ENCODE measurements at regions of chr16 and their contacts with region 1.

Region 1: DNA sequence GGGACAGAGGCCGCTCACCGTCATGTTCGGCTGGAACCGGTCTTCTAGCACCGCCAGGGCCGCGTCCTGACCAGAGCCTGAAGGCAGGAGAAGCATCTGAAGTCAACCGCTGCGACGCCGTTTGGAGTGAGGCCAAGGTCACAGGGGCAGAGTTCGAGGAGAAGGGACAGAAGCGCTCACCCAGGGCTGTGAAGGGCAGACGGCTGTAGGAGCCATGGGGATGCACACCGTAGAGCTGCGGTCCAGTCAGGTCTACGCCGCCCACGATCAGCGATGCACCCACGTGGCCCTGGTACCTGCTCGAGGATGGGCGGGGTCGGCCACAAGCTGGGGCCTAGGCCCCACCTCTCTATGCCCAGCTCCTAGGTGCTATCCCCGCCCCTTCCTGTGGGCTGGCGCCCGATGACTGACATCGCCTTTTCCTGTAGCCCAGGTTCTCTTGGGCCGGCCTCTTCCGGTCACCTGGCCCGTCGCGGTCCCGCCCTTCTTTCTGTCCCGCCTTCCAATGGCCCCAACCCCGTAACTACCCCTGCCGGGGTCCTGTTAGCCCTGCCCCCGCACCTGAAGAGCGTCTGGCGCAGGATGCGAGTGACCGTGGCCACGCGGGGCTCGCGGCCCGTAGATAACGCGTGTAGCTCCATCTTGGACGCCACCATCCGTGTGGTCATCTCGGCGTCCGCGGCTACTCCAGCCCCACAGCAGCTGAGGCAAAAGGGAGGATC is 1.1 kb downstream of the PSMB10 start:
- DNase-seq: peak; percentile 86 to 99 (median 94)
- ATAC-seq: peak; percentile 91
- H3K4me3 ChIP-seq: peak overlapping the region; percentile 96
- H3K4me3 Mint-ChIP-seq: peak overlapping the region; percentile 98
- H3K27ac ChIP-seq: peak overlapping the region; percentile 84 to 89
- H3K27ac Mint-ChIP-seq: peak overlapping the region; percentile 95
- H3K4me1 ChIP-seq: peaks cover 48% of the 10 kb centered on the region
- H3K4me1 Mint-ChIP-seq: peaks cover 38% of the 10 kb centered on the region
- H3K27me3 ChIP-seq: no peaks in the 10 kb centered on the region
- H3K27me3 Mint-ChIP-seq: no peaks in the 10 kb centered on the region
- CTCF ChIP-seq: no peak

Region 2: GRCh38 chr16:67719048-67719777 is 216.3 kb before region 1 on chr16 and contains the start of gene GFOD2:
- CTCF ChIA-PET with region 1: no interaction called
- POLR2A ChIA-PET with region 1: interaction called, 11 read pairs
- intact Hi-C with region 1: no loop called
- DNase-seq: peak; percentile 96 to 100 (median 98)
- ATAC-seq: peak; percentile 94
- H3K4me3 ChIP-seq: peak within 1 kb of the TSS; percentile 76
- H3K4me3 Mint-ChIP-seq: peak within 1 kb of the TSS; percentile 97
- H3K27ac ChIP-seq: peak within 1 kb of the TSS; percentile 81 to 93
- H3K27ac Mint-ChIP-seq: peak within 1 kb of the TSS; percentile 93
- H3K4me1 ChIP-seq: peaks cover 26% of the 10 kb centered on the region
- H3K4me1 Mint-ChIP-seq: peaks cover 42% of the 10 kb centered on the region
- H3K27me3 ChIP-seq: no peaks in the 10 kb centered on the region
- H3K27me3 Mint-ChIP-seq: no peaks in the 10 kb centered on the region
- CTCF ChIP-seq: no peak
- total RNA-seq, gene GFOD2: 2.8 to 3.7 TPM

Region 3: GRCh38 chr16:67841764-67842508 is 93.6 kb before region 1 on chr16 and contains the start of gene THAP11:
- CTCF ChIA-PET with region 1: no interaction called
- POLR2A ChIA-PET with region 1: interaction called, 26 read pairs
- intact Hi-C with region 1: loop called in 1 of 2 experiments (anchors 1 kb)
- DNase-seq: peak; percentile 90 to 97 (median 94)
- ATAC-seq: peak; percentile 55
- H3K4me3 ChIP-seq: peak within 1 kb of the TSS; percentile 96
- H3K4me3 Mint-ChIP-seq: peak within 1 kb of the TSS; percentile 98
- H3K27ac ChIP-seq: peak within 1 kb of the TSS; percentile 87 to 99
- H3K27ac Mint-ChIP-seq: peak within 1 kb of the TSS; percentile 95
- H3K4me1 ChIP-seq: peaks cover 50% of the 10 kb centered on the region
- H3K4me1 Mint-ChIP-seq: peaks cover 42% of the 10 kb centered on the region
- H3K27me3 ChIP-seq: no peaks in the 10 kb centered on the region
- H3K27me3 Mint-ChIP-seq: no peaks in the 10 kb centered on the region
- CTCF ChIP-seq: peak; percentile 85
- total RNA-seq, gene THAP11: 31.2 to 32.1 TPM

Region 4: GRCh38 chr16:67892899-67893742 is 42.4 kb before region 1 on chr16 and contains the start of gene PSKH1:
- CTCF ChIA-PET with region 1: no interaction called
- POLR2A ChIA-PET with region 1: interaction called, 16 read pairs
- intact Hi-C with region 1: loop called (anchors 2 to 5 kb)
- DNase-seq: peak; percentile 87 to 98 (median 92)
- ATAC-seq: peak; percentile 98
- H3K4me3 ChIP-seq: peak within 1 kb of the TSS; percentile 83
- H3K4me3 Mint-ChIP-seq: peak within 1 kb of the TSS; percentile 98
- H3K27ac ChIP-seq: peak within 1 kb of the TSS; percentile 82 to 83
- H3K27ac Mint-ChIP-seq: peak within 1 kb of the TSS; percentile 94
- H3K4me1 ChIP-seq: peaks cover 29% of the 10 kb centered on the region
- H3K4me1 Mint-ChIP-seq: peaks cover 37% of the 10 kb centered on the region
- H3K27me3 ChIP-seq: no peaks in the 10 kb centered on the region
- H3K27me3 Mint-ChIP-seq: no peaks in the 10 kb centered on the region
- CTCF ChIP-seq: no peak
- total RNA-seq, gene PSKH1: 11.4 to 13.3 TPM

Region 5: DNA sequence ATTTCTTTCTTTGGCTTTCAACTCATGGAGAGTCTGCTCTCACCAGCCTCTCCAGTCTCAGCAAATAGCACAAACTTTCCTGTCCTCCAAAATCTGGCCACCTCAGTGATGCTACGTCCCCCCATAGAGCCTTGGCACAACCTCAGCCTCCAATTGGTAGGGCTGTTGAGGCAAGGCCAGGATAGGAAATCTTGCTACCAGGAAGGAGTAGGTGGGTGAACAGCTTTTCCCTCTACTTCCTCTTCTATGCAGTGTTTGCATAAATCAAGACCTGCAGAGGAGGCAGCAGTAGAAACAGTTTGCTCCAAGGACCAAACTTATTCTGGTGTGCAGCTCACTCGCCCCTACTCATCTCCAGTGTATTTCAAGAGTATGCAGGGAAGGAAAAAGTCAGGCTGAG is 64.4 kb after region 1 on chr16:
- CTCF ChIA-PET with region 1: no interaction called
- POLR2A ChIA-PET with region 1: interaction called, 44 read pairs
- intact Hi-C with region 1: no loop called
- DNase-seq: peak in 3 of 14 experiments; percentile 6 to 34 (median 22)
- ATAC-seq: peak; percentile 11
- H3K4me3 ChIP-seq: peak overlapping the region; percentile 61
- H3K4me3 Mint-ChIP-seq: peak overlapping the region; percentile 86
- H3K27ac ChIP-seq: peak overlapping the region; percentile 48 to 83
- H3K27ac Mint-ChIP-seq: peak overlapping the region; percentile 93
- H3K4me1 ChIP-seq: peaks cover 70% of the 10 kb centered on the region
- H3K4me1 Mint-ChIP-seq: peaks cover 55% of the 10 kb centered on the region
- H3K27me3 ChIP-seq: no peaks in the 10 kb centered on the region
- H3K27me3 Mint-ChIP-seq: no peaks in the 10 kb centered on the region
- CTCF ChIP-seq: no peak

Region 6: DNA sequence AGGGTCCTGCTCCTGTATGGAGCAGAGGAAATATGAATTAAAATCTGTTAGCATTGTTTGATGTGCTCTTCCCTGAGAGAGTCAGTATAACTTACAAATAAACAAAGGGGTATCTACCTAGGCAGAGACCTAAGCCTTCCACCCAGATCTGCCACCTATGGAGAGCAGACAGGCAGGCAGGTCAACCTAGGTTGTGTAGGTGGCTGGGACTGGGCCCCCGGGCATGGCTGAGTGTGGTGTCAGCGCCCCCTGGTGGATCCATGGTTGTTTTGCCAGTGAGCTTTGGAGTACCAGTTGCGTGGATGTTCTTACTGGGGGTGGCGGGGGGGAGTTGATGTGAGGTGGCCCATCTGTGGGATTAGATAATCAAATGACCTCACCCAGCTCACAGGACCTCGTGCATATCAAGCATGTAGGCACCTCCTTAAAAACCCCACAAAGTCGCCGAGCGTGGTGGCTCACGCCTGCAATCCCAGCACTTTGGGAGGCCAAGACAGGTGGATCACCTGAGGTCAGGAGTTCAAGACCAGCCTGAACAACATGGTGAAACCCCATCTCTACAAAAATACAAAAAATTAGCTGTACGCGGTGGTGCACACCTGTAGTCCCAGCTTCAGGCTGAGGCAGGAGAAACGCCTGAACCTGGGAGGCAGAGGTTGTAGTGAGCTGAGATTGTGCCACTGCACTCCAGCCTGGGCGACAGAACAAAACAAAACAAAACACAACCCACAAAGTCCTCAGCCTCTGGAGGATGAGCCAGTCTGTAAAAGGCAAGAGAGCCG is 105.1 kb after region 1 on chr16:
- CTCF ChIA-PET with region 1: interaction called, 9 read pairs
- POLR2A ChIA-PET with region 1: interaction called, 6 read pairs
- intact Hi-C with region 1: loop called in 1 of 2 experiments (anchors 5 kb)
- DNase-seq: peak; percentile 83 to 96 (median 91)
- ATAC-seq: peak; percentile 98
- H3K4me3 ChIP-seq: no peak overlapping the region
- H3K4me3 Mint-ChIP-seq: no peak overlapping the region
- H3K27ac ChIP-seq: no peak overlapping the region
- H3K27ac Mint-ChIP-seq: peak overlapping the region; percentile 57
- H3K4me1 ChIP-seq: peaks cover 14% of the 10 kb centered on the region
- H3K4me1 Mint-ChIP-seq: peaks cover 11% of the 10 kb centered on the region
- H3K27me3 ChIP-seq: no peaks in the 10 kb centered on the region
- H3K27me3 Mint-ChIP-seq: no peaks in the 10 kb centered on the region
- CTCF ChIP-seq: peak; percentile 82

Region 7: GRCh38 chr16:68345351-68345810 is 409.8 kb after region 1 on chr16:
- CTCF ChIA-PET with region 1: no interaction called
- POLR2A ChIA-PET with region 1: no interaction called
- intact Hi-C with region 1: no loop called
- DNase-seq: no peak
- ATAC-seq: no peak
- H3K4me3 ChIP-seq: no peak overlapping the region
- H3K4me3 Mint-ChIP-seq: no peak overlapping the region
- H3K27ac ChIP-seq: no peak overlapping the region
- H3K27ac Mint-ChIP-seq: no peak overlapping the region
- H3K4me1 ChIP-seq: no peaks in the 10 kb centered on the region
- H3K4me1 Mint-ChIP-seq: no peaks in the 10 kb centered on the region
- H3K27me3 ChIP-seq: no peaks in the 10 kb centered on the region
- H3K27me3 Mint-ChIP-seq: no peaks in the 10 kb centered on the region
- CTCF ChIP-seq: no peak